PC-3 (cell line): ENCODE measurements at regions of chr10 and their contacts with region 1.

Region 1: GRCh38 chr10:97138174-97138573 is 47.6 kb downstream of the SLIT1 start:
- DNase-seq: peak; percentile 9
- ATAC-seq: peak; percentile 77
- H3K4me3 ChIP-seq: no peak overlapping the region
- H3K27ac ChIP-seq: no peak overlapping the region
- H3K4me1 ChIP-seq: no peaks in the 10 kb centered on the region
- H3K27me3 ChIP-seq: peaks cover 9% of the 10 kb centered on the region
- CTCF ChIP-seq: peak; percentile 57

Region 2: GRCh38 chr10:97059006-97059871 is 78.9 kb before region 1 on chr10:
- CTCF ChIA-PET with region 1: no interaction called
- POLR2A ChIA-PET with region 1: no interaction called
- intact Hi-C with region 1: no loop called
- DNase-seq: no peak
- ATAC-seq: no peak
- H3K4me3 ChIP-seq: no peak overlapping the region
- H3K27ac ChIP-seq: no peak overlapping the region
- H3K4me1 ChIP-seq: no peaks in the 10 kb centered on the region
- H3K27me3 ChIP-seq: no peaks in the 10 kb centered on the region
- CTCF ChIP-seq: 0 out of 2 replicates have a peak, but pooled peaks have one; percentile 11

Region 3: GRCh38 chr10:97210543-97210961 is 72.4 kb after region 1 on chr10:
- CTCF ChIA-PET with region 1: no interaction called
- POLR2A ChIA-PET with region 1: no interaction called
- intact Hi-C with region 1: loop called (anchors 1 kb)
- DNase-seq: peak; percentile 81
- ATAC-seq: peak; percentile 64; the same call in 1 of the 2 replicates
- H3K4me3 ChIP-seq: no peak overlapping the region
- H3K27ac ChIP-seq: no peak overlapping the region
- H3K4me1 ChIP-seq: no peaks in the 10 kb centered on the region
- H3K27me3 ChIP-seq: no peaks in the 10 kb centered on the region
- CTCF ChIP-seq: peak; percentile 89

Region 4: DNA sequence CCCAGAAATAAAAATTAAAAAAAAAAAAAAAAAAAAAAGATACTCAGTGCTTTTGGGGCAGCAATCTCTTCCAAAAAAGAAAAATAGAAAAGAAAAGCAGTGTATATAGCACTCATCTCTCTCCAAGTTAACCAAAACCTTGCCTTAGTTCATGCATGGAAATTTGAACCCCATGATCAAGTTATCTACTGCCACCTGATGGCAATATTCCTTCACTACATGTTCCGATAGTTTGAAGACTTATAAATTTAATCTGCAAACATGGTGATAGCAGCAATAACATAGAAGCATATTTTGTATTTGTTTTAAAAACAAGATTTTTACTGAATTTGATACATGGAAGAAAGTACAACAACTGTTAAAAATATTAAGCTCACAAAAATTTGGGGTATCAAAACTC is 96.2 kb after region 1 on chr10:
- CTCF ChIA-PET with region 1: no interaction called
- POLR2A ChIA-PET with region 1: no interaction called
- intact Hi-C with region 1: loop called (anchors 2 kb)
- DNase-seq: peak; percentile 61
- ATAC-seq: no peak
- H3K4me3 ChIP-seq: no peak overlapping the region
- H3K27ac ChIP-seq: no peak overlapping the region
- H3K4me1 ChIP-seq: peaks cover 12% of the 10 kb centered on the region
- H3K27me3 ChIP-seq: no peaks in the 10 kb centered on the region
- CTCF ChIP-seq: peak; percentile 74

Region 5: DNA sequence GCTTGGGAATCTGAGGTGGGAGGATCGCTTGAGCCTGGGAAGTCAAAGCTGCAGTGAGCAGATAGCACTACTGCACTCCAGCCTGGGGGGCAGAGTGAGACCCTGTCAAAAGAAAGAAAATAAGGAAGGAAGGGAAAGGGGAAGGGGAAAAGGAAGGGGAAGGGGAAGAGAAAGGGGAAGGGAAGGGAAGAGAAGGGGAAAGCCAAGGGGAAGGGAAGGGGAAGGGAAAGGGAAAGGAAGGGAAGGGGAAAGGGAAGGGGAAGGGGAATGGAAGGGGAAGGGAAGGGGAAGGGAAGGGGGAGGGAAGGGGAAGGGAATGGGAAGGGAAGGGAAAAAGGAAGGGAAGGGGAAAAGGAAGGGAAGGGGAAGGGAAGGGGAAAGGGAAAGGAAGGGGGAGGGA is 112.8 kb after region 1 on chr10:
- CTCF ChIA-PET with region 1: no interaction called
- POLR2A ChIA-PET with region 1: no interaction called
- intact Hi-C with region 1: no loop called
- DNase-seq: no peak
- ATAC-seq: no peak
- H3K4me3 ChIP-seq: no peak overlapping the region
- H3K27ac ChIP-seq: no peak overlapping the region
- H3K4me1 ChIP-seq: no peaks in the 10 kb centered on the region
- H3K27me3 ChIP-seq: no peaks in the 10 kb centered on the region
- CTCF ChIP-seq: no peak